Caco-2 (cell line): ENCODE measurements at regions of chr20 and their contacts with region 1.

Region 1: GRCh38 chr20:41693136-41693979 is 75.2 kb upstream of the CHD6 start:
- DNase-seq: peak; percentile 92 to 95
- H3K4me3 ChIP-seq: peak overlapping the region; percentile 43
- H3K4me3 Mint-ChIP-seq: peak overlapping the region; percentile 86
- H3K27ac Mint-ChIP-seq: peak overlapping the region; percentile 90
- H3K4me1 ChIP-seq: peaks cover 16% of the 10 kb centered on the region
- H3K4me1 Mint-ChIP-seq: peaks cover 19% of the 10 kb centered on the region
- H3K27me3 ChIP-seq: no peaks in the 10 kb centered on the region
- H3K27me3 Mint-ChIP-seq: peaks cover 2% of the 10 kb centered on the region
- CTCF ChIP-seq: peak; percentile 66 to 68

Region 2: DNA sequence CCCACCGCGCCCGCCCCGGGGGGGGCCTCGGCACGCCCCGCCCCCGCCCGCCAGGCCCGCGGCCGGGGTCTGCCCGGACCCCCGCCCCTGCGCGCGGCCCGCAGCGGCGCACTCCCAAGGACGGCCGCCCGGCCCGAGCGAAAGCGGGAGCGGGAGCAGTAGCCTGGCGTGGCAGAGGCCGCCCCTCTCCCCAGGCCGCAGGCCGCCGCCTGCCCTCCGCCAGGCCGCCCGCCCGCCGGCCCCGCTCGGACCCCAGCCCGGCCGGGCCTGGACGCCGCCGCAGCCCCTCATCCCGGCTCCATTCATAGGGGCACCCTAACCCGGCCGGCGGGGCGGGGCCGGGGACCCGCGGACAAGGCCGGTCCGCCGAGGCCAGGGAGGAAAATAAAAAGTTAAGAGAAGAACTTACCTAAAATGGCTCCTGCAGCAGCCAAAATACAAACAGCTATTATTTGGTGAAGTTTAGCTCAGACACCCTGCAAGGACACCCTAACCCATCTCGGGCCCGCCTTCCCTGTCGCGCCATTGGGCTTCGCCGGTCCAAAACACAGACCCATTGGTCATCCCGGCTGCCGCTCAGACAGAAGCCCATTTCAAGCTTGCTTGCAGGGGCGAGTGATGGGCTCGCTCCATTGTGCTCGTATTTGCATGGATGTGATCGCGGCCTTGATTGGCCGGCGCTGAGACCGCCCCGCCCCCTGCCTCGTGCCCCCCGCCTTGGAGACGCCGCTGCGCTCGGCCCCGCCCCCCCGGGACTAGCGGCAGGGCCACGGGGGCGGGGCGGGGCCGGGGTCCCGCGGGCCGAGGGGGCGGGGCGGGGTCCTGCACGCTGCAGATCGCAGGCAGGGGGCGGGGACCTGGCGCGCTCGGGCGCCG is 75.2 kb before region 1 on chr20 and contains the start of gene CHD6:
- CTCF ChIA-PET with region 1: interaction called, 29 read pairs
- POLR2A ChIA-PET with region 1: interaction called, 11 read pairs
- intact Hi-C with region 1: loop called (anchors 2 kb)
- DNase-seq: peak; percentile 100
- H3K4me3 ChIP-seq: peak within 1 kb of the TSS; percentile 67
- H3K4me3 Mint-ChIP-seq: peak within 1 kb of the TSS; percentile 86
- H3K27ac Mint-ChIP-seq: peak within 1 kb of the TSS; percentile 67
- H3K4me1 ChIP-seq: peaks cover 26% of the 10 kb centered on the region
- H3K4me1 Mint-ChIP-seq: peaks cover 42% of the 10 kb centered on the region
- H3K27me3 ChIP-seq: no peaks in the 10 kb centered on the region
- H3K27me3 Mint-ChIP-seq: no peaks in the 10 kb centered on the region
- CTCF ChIP-seq: no peak
- total RNA-seq, gene CHD6: 80.5 and 88.1 TPM in 2 replicates

Region 3: GRCh38 chr20:41654884-41655283 is 38.5 kb before region 1 on chr20:
- CTCF ChIA-PET with region 1: interaction called, 14 read pairs
- POLR2A ChIA-PET with region 1: interaction called, 9 read pairs
- intact Hi-C with region 1: loop called (anchors 1 kb)
- DNase-seq: peak; percentile 67 to 79
- H3K4me3 ChIP-seq: no peak overlapping the region
- H3K4me3 Mint-ChIP-seq: no peak overlapping the region
- H3K27ac Mint-ChIP-seq: no peak overlapping the region
- H3K4me1 ChIP-seq: peaks cover 25% of the 10 kb centered on the region
- H3K4me1 Mint-ChIP-seq: peaks cover 23% of the 10 kb centered on the region
- H3K27me3 ChIP-seq: no peaks in the 10 kb centered on the region
- H3K27me3 Mint-ChIP-seq: no peaks in the 10 kb centered on the region
- CTCF ChIP-seq: no peak